CD4-positive, alpha-beta T cell (primary cell): ENCODE measurements at regions of chr1 and their contacts with region 1.

Region 1: GRCh38 chr1:8472668-8473067 is 154.8 kb downstream of the SLC45A1 start:
- DNase-seq: peak in 8 of 14 experiments; percentile 13 to 62 (median 38)
- ATAC-seq: peak; percentile 96
- H3K4me3 ChIP-seq: no peak overlapping the region
- H3K4me3 Mint-ChIP-seq: no peak overlapping the region
- H3K27ac ChIP-seq: no peak overlapping the region
- H3K27ac Mint-ChIP-seq: peak overlapping the region; percentile 61
- H3K4me1 ChIP-seq: peaks cover 8% of the 10 kb centered on the region
- H3K4me1 Mint-ChIP-seq: peaks cover 46% of the 10 kb centered on the region
- H3K27me3 ChIP-seq: no peaks in the 10 kb centered on the region
- H3K27me3 Mint-ChIP-seq: no peaks in the 10 kb centered on the region
- CTCF ChIP-seq: no peak

Region 2: GRCh38 chr1:8090241-8090702 is 382.4 kb before region 1 on chr1:
- CTCF ChIA-PET with region 1: no interaction called
- POLR2A ChIA-PET with region 1: no interaction called
- intact Hi-C with region 1: no loop called
- DNase-seq: no peak
- ATAC-seq: no peak
- H3K4me3 ChIP-seq: no peak overlapping the region
- H3K4me3 Mint-ChIP-seq: no peak overlapping the region
- H3K27ac ChIP-seq: no peak overlapping the region
- H3K27ac Mint-ChIP-seq: no peak overlapping the region
- H3K4me1 ChIP-seq: no peaks in the 10 kb centered on the region
- H3K4me1 Mint-ChIP-seq: no peaks in the 10 kb centered on the region
- H3K27me3 ChIP-seq: no peaks in the 10 kb centered on the region
- H3K27me3 Mint-ChIP-seq: peaks cover 34% of the 10 kb centered on the region
- CTCF ChIP-seq: no peak

Region 3: GRCh38 chr1:8396786-8397406 is 75.8 kb before region 1 on chr1:
- CTCF ChIA-PET with region 1: no interaction called
- POLR2A ChIA-PET with region 1: no interaction called
- intact Hi-C with region 1: loop called in 1 of 2 experiments (anchors 5 kb)
- DNase-seq: peak in 3 of 14 experiments; percentile 32 to 46 (median 35)
- ATAC-seq: peak; percentile 61
- H3K4me3 ChIP-seq: no peak overlapping the region
- H3K4me3 Mint-ChIP-seq: peak overlapping the region; percentile 39
- H3K27ac ChIP-seq: peak overlapping the region; percentile 8 to 18
- H3K27ac Mint-ChIP-seq: peak overlapping the region; percentile 88
- H3K4me1 ChIP-seq: peaks cover 52% of the 10 kb centered on the region
- H3K4me1 Mint-ChIP-seq: peaks cover 75% of the 10 kb centered on the region
- H3K27me3 ChIP-seq: no peaks in the 10 kb centered on the region
- H3K27me3 Mint-ChIP-seq: no peaks in the 10 kb centered on the region
- CTCF ChIP-seq: no peak

Region 4: GRCh38 chr1:8431019-8431418 is 41.6 kb before region 1 on chr1:
- CTCF ChIA-PET with region 1: no interaction called
- POLR2A ChIA-PET with region 1: no interaction called
- intact Hi-C with region 1: loop called in 1 of 2 experiments (anchors 2 kb)
- DNase-seq: peak in 12 of 14 experiments; percentile 22 to 74 (median 43)
- ATAC-seq: peak; percentile 87
- H3K4me3 ChIP-seq: no peak overlapping the region
- H3K4me3 Mint-ChIP-seq: peak overlapping the region; percentile 66
- H3K27ac ChIP-seq: peak overlapping the region; percentile 24 to 53
- H3K27ac Mint-ChIP-seq: peak overlapping the region; percentile 88
- H3K4me1 ChIP-seq: peaks cover 58% of the 10 kb centered on the region
- H3K4me1 Mint-ChIP-seq: peaks cover 68% of the 10 kb centered on the region
- H3K27me3 ChIP-seq: no peaks in the 10 kb centered on the region
- H3K27me3 Mint-ChIP-seq: no peaks in the 10 kb centered on the region
- CTCF ChIP-seq: peak; percentile 56